ENCODE measurements at regions of chr17 and their contacts with region 1.

Region 1: DNA sequence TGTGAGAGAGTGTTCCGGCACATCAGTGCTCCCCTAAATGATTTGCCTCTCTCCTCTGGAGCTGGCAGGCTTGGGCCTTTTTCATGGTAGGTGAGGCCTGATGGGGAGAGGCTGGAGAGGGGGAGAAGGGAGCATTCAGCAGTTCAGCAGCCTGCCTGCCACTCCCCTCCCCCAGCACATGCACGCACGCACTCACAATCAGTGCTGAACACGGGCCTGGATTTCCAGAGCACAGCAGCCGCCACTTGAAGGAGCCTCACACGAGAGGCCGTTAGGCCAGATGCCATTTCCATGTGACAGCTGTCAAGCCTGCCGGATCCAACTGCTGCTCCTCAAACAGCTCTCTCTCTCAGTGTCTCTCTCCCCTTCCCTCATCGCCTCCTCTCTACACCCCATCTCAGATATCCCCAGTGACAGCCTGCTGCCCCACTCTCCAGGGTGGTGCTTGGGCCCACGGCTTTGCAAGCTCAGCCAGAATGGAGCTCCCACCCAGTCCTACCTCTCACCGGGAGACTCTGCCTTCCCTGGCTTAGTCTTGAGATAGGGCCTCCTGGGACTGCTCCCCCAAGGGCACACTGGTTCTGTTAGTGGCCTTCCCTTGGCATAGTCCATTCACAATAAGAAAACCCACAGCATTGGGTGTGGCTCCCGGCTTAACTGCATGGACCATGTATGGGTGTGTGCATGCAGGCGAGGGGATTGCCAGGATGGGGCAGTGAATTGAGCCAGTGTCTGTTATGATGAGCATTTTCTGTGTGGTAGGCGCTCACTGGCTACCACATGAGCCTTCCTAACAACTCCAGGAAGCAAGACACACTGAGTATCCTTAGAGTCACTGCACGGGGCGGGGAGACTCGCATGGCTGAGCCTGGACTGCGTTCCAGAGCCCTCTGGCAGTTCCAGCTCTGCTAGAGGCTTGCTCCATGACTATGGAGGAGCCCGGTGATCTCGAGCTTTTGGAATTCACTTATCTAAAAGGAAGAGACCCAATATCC is 226.2 kb downstream of the CCDC182 start:
- DNase-seq: no peak
- ATAC-seq: no peak
- H3K4me3 ChIP-seq: no peak overlapping the region
- H3K27ac ChIP-seq: peak overlapping the region; percentile 95
- H3K4me1 ChIP-seq: peaks cover 89% of the 10 kb centered on the region
- H3K27me3 ChIP-seq: no peaks in the 10 kb centered on the region; a peak in 1 of 5 replicates
- CTCF ChIP-seq: no peak
- EP300 ChIP-seq: no peak
- POLR2A ChIP-seq: no peak
- RAD21 ChIP-seq: no peak

Region 2: GRCh38 chr17:57413848-57414651 is 104.8 kb before region 1 on chr17:
- CTCF ChIA-PET with region 1: no interaction called
- POLR2A ChIA-PET with region 1: interaction called, 11 read pairs
- in situ Hi-C with region 1: no loop called
- intact Hi-C with region 1: no loop called
- DNase-seq: peak; percentile 98
- ATAC-seq: peak; percentile 100
- H3K4me3 ChIP-seq: peak overlapping the region in 1 of 3 experiments; percentile 26; a peak in 1 of 6 replicates
- H3K27ac ChIP-seq: peak overlapping the region; percentile 86
- H3K4me1 ChIP-seq: peaks cover 76% of the 10 kb centered on the region
- H3K27me3 ChIP-seq: no peaks in the 10 kb centered on the region
- CTCF ChIP-seq: no peak
- EP300 ChIP-seq: peak; percentile 70 to 97; a peak in 3 of 4 replicates
- POLR2A ChIP-seq: no peak
- RAD21 ChIP-seq: peak; percentile 52

Region 3: GRCh38 chr17:57463103-57463851 is 55.6 kb before region 1 on chr17:
- CTCF ChIA-PET with region 1: interaction called, 5 read pairs
- POLR2A ChIA-PET with region 1: interaction called, 20 read pairs
- in situ Hi-C with region 1: no loop called
- intact Hi-C with region 1: loop called (anchors 1 kb)
- DNase-seq: peak; percentile 30
- ATAC-seq: no peak
- H3K4me3 ChIP-seq: no peak overlapping the region
- H3K27ac ChIP-seq: no peak overlapping the region
- H3K4me1 ChIP-seq: peaks cover 74% of the 10 kb centered on the region
- H3K27me3 ChIP-seq: no peaks in the 10 kb centered on the region
- CTCF ChIP-seq: no peak
- EP300 ChIP-seq: no peak
- POLR2A ChIP-seq: no peak
- RAD21 ChIP-seq: no peak

Region 4: DNA sequence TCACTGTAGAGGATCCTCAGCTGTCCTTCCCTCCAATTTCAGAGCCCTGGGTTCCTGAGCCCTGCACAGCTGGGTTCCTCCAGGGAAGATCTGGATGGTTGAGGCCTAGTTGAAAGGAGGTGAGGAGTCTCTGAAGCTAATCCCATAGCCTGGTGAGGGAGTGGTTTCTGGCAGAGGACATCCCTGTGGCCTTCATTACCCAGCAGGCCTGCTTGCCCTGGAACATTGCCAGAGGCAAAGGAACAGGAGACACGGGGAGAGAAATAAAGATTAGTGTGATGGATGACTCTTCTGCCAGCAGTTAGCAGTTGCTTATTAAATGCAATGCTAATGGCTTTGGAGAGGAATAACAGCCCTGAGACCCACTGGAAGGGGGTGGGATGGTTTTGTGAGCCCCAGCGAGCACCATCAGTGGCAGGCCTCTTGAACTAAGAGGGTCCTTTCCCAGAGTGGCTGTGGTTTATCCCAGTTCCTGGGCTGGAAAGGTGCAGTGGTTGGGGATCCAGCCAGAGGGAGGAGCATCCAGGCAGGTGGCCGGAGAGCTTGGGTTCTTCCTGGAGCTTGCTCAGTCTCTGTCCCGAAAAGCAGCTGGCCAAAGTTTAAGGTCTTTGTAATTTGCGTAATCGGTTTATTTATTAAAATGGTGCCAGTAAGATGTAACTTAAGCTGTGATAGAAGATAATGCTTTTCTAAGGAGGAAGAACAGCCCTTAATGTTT is 16.5 kb after region 1 on chr17:
- CTCF ChIA-PET with region 1: no interaction called
- POLR2A ChIA-PET with region 1: interaction called, 70 read pairs
- in situ Hi-C with region 1: no loop called
- intact Hi-C with region 1: loop called (anchors 1 kb)
- DNase-seq: no peak
- ATAC-seq: no peak
- H3K4me3 ChIP-seq: no peak overlapping the region
- H3K27ac ChIP-seq: peak overlapping the region; percentile 14
- H3K4me1 ChIP-seq: peaks cover 97% of the 10 kb centered on the region
- H3K27me3 ChIP-seq: no peaks in the 10 kb centered on the region
- CTCF ChIP-seq: no peak
- EP300 ChIP-seq: peak in 1 of 2 experiments; percentile 18; a peak in 1 of 4 replicates
- POLR2A ChIP-seq: no peak
- RAD21 ChIP-seq: no peak

Region 5: DNA sequence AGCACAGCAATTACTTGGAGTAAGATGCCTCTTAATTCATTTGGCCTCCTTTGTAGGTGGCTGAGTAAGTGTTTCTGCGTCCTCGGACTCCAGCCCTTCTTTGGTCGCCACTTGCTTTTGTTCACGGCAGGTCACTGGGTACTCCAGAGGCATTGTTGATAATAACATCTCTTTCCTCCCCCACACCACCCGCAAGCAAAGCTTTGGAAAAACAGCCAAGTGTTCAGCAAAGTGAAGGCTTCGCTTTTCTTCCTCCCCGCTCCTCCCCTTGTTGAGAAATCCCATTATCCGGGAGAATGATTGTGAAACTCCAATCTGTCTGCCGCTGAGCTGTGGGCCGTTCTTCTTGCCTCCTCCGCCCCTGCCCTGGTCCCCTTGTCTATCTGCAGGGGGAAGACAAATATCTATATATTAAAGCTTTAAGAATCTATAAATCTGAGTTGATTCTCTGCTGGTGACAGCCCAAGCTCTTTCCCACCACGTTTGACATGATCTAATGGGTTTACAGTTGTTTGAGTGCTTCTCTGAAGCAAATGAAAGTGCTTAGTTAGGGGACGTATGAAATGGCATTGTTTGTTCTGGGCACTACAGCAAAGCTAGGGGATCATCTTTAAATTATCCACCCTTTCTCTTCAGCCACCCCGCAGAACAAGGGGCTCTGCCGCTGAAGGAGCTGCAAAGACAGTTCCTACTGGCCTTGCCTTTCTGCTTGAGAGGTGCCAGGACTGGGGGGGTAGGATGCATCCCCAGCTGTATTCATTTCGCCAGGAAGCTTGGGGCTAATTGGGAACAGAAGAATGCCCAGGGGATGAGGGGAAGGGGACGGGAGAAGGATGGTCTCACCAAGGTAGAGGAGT is 59.1 kb after region 1 on chr17:
- CTCF ChIA-PET with region 1: no interaction called
- POLR2A ChIA-PET with region 1: interaction called, 41 read pairs
- in situ Hi-C with region 1: no loop called
- intact Hi-C with region 1: loop called (anchors 5 kb)
- DNase-seq: peak; percentile 95
- ATAC-seq: peak; percentile 80
- H3K4me3 ChIP-seq: peak overlapping the region; percentile 17 to 56 (median 24); a peak in 5 of 6 replicates
- H3K27ac ChIP-seq: peak overlapping the region; percentile 75
- H3K4me1 ChIP-seq: peaks cover 84% of the 10 kb centered on the region
- H3K27me3 ChIP-seq: no peaks in the 10 kb centered on the region
- CTCF ChIP-seq: no peak; the same call in 1 of the 2 replicates
- EP300 ChIP-seq: peak; percentile 77 to 96; a peak in 3 of 4 replicates
- POLR2A ChIP-seq: 0 out of 4 replicates have a peak, but pooled peaks of 1 of the 2 experiments have one; percentile 13
- RAD21 ChIP-seq: no peak

Region 6: GRCh38 chr17:57604771-57605674 is 86.1 kb after region 1 on chr17:
- CTCF ChIA-PET with region 1: no interaction called
- POLR2A ChIA-PET with region 1: interaction called, 9 read pairs
- in situ Hi-C with region 1: no loop called
- intact Hi-C with region 1: loop called (anchors 1 kb)
- DNase-seq: no peak
- ATAC-seq: no peak
- H3K4me3 ChIP-seq: no peak overlapping the region
- H3K27ac ChIP-seq: no peak overlapping the region
- H3K4me1 ChIP-seq: peaks cover 41% of the 10 kb centered on the region
- H3K27me3 ChIP-seq: no peaks in the 10 kb centered on the region
- CTCF ChIP-seq: no peak
- EP300 ChIP-seq: no peak
- POLR2A ChIP-seq: no peak
- RAD21 ChIP-seq: no peak

Measured in HepG2 (cell line).